Heart right ventricle (tissue), 16 donors: ENCODE measurements at regions of chr1 and their contacts with region 1.

Region 1: DNA sequence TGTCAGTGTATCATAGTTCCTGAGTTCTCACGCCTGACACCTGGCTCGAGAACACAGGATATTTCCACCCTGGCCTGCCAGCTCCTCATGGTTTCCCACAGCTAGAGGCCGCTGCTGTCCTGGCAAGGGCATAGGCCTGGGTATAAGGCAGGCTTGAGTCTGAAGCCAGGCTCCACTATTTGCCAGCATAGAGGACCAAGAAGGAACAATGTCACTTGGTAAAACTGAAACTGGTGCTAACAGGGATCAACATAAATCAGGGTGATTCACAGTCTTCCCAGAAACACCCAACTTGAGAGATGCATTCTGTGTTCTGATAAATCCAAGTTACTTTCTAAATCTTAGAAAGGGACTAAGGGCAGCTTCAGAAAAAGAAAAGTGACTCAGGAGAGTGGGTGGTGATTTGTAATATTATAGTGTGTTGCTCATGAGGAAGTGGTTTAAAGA is 6.9 kb upstream of the S100A2 start:
- DNase-seq: peak; percentile 77 to 83
- ATAC-seq: peak; percentile 87 to 92 (median 91)
- H3K4me3 ChIP-seq: no peak overlapping the region
- H3K27ac ChIP-seq: peak overlapping the region in 7 of 10 donors; percentile 18 to 78 (median 45)
- H3K4me1 ChIP-seq: peaks cover 5 to 35% (median 19%) of the 10 kb centered on the region in 9 donors
- H3K27me3 ChIP-seq: no peaks in the 10 kb centered on the region
- CTCF ChIP-seq: peak; percentile 67 to 93 (median 80)

Region 2: GRCh38 chr1:153510984-153511410 is 61.6 kb before region 1 on chr1:
- intact Hi-C with region 1: loop called (anchors 1 to 10 kb)
- DNase-seq: peak; percentile 80 to 85
- ATAC-seq: peak; percentile 41 to 73 (median 64)
- H3K4me3 ChIP-seq: no peak overlapping the region
- H3K27ac ChIP-seq: no peak overlapping the region
- H3K4me1 ChIP-seq: peaks cover 9 to 38% (median 21%) of the 10 kb centered on the region in 9 donors
- H3K27me3 ChIP-seq: no peaks in the 10 kb centered on the region
- CTCF ChIP-seq: peak; percentile 82 to 99 (median 95)

Region 3: DNA sequence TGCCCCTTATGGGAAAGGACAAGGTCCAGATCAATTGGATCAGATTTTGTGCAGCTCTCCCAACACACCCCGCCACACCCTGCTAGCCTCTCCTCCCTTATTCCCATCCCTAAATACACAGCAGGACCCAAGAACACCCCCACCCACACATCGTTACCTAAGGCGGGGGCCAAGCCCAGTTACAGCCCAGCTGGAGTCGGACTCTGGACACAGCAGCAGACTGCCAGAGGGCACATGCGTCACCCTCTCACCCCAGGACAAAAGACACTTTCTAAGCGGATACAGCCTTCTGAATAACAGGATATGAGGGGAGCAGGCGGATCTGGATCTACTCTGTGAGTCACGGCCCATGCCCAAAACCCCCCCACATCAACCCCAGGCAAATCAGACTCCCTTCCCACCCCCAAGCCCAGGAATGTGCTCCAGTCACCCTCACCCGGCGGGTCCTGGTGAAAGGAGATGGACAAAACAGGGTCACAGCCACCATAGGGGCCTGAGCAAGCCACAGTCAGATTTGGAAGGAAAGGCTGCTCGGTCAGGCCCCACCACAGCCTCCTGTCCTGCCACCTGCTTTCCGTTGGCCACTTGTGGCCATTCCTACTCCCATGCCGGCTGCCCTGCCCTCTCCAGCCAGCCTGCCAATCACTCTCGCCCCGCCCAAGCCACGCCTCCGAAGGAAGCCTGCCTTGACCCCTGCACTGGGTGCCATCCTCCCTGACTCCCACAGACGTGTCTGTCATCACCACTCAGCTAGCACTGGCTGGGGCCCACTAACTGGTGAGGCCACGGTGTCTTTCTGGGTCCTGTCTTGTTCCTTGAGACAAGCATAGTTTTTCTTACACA is 36.4 kb after region 1 on chr1:
- intact Hi-C with region 1: loop called in 1 of 10 experiments (anchors 5 kb)
- DNase-seq: peak; percentile 78 to 88
- ATAC-seq: peak; percentile 72 to 89 (median 80)
- H3K4me3 ChIP-seq: peak overlapping the region; percentile 38 to 73 (median 55)
- H3K27ac ChIP-seq: peak overlapping the region; percentile 90 to 99 (median 96)
- H3K4me1 ChIP-seq: peaks cover 10 to 57% (median 35%) of the 10 kb centered on the region in 9 donors
- H3K27me3 ChIP-seq: no peaks in the 10 kb centered on the region
- CTCF ChIP-seq: no peak

Region 4: GRCh38 chr1:153658400-153659174 is 86.0 kb after region 1 on chr1 and contains the start of gene SNAPIN:
- intact Hi-C with region 1: loop called in 3 of 10 experiments (anchors 10 kb)
- DNase-seq: peak; percentile 93 to 95
- ATAC-seq: peak; percentile 96 to 98 (median 98)
- H3K4me3 ChIP-seq: peak within 1 kb of the TSS; percentile 63 to 94 (median 80)
- H3K27ac ChIP-seq: peak within 1 kb of the TSS; percentile 73 to 99 (median 95)
- H3K4me1 ChIP-seq: peaks cover 0 to 20% (median 11%) of the 10 kb centered on the region in 9 donors
- H3K27me3 ChIP-seq: no peaks in the 10 kb centered on the region
- CTCF ChIP-seq: peak in 7 of 9 donors; percentile 5 to 51 (median 20)
- total RNA-seq, gene SNAPIN: 56.7 to 83.3 (median 73.4) TPM

Region 5: GRCh38 chr1:153677718-153678505 is 105.3 kb after region 1 on chr1:
- intact Hi-C with region 1: loop called in 2 of 10 experiments (anchors 5 kb)
- DNase-seq: peak; percentile 40 to 54
- ATAC-seq: peak; percentile 52 to 87 (median 76)
- H3K4me3 ChIP-seq: peak overlapping the region; percentile 48 to 73 (median 66)
- H3K27ac ChIP-seq: peak overlapping the region; percentile 44 to 85 (median 78)
- H3K4me1 ChIP-seq: peaks cover 8 to 28% (median 22%) of the 10 kb centered on the region in 9 donors
- H3K27me3 ChIP-seq: peaks cover 9 to 41% (median 19%) of the 10 kb centered on the region in 7 donors
- CTCF ChIP-seq: peak; percentile 79 to 96 (median 93)

Region 6: DNA sequence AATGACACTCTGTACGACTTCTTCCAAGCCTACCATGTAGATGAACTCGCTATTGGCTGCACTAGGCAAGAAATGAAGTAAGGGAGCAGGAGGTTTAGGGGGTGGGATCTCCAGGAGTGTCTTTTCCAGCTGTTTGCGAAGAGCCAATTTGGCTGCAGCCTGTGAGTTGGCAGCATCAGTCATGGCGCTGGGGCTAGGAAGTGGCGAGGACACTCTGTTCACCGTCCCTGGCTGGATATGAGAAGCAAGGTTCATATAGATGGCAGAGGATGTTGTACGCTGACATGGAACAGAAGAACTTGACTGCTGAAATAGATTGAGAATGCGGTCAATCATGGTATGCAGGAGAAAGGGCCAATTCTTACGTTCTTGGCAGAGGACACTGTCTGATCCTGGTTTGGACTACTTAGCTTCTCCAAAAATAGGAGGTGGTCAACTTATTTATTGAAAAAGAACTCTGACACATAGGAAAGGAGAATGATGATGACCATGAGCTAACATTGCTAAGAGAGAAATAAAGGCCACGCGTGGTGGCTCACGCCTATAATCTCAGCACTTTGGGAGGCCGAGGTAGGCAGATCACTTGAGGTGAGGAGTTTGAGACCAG is 243.8 kb after region 1 on chr1:
- intact Hi-C with region 1: no loop called
- DNase-seq: no peak
- ATAC-seq: peak in 4 of 8 donors; percentile 32 to 78 (median 63)
- H3K4me3 ChIP-seq: no peak overlapping the region
- H3K27ac ChIP-seq: peak overlapping the region in 4 of 10 donors; percentile 7 to 57 (median 23)
- H3K4me1 ChIP-seq: peaks cover 0 to 25% (median under 1%) of the 10 kb centered on the region in 9 donors
- H3K27me3 ChIP-seq: no peaks in the 10 kb centered on the region
- CTCF ChIP-seq: no peak